ENCODE measurements at regions of chr6 and their contacts with region 1.

Region 1: DNA sequence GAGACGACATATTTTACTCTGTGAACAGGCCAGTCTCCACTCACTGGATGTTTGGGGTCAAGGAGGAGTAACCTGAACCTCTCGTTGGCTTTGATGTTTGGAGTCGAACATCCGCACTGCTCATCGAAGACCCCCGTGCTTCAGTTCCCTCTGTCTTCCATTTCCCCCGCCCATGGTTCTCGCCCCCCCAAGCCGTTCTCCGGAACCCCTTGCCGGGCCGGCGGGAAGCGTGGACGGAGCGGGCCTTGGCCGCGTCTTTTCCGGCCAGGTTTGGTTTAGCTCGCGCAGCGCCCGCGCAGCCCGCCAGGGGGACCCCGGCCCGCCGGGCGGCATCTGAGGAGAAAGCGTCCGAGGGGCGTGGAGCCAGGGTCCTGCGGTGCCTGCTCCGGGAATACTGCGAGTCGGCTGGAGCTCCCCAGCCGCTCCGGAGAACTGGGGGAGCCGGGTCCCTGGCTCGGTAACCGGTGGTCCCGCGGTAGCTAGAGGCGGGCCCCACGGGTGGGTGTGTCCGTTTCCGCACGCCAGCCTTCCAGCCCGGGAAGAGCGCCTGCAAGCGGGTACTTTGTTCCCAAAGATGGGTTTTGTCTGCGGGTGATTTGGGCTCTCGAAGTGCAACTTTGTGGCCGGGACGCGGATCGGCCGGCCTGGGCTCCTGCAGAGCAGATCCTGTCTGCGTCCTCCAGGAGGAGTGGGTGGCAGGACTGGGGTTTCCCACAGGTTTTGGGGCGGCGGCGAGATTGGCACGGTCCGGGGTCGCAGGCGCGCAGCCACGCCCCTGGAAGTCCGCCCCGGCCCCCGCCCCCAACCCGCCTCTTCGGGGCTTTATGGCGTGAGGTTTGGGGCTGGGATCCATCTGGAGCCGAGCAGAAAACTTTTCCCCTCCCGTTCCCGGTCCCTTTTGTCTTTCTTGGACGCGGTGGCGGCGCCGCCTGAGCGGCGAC is at the start of gene TMEM200A:
- DNase-seq: peak; percentile 88
- total RNA-seq, gene TMEM200A: 10.3 to 24.0 TPM

Region 2: DNA sequence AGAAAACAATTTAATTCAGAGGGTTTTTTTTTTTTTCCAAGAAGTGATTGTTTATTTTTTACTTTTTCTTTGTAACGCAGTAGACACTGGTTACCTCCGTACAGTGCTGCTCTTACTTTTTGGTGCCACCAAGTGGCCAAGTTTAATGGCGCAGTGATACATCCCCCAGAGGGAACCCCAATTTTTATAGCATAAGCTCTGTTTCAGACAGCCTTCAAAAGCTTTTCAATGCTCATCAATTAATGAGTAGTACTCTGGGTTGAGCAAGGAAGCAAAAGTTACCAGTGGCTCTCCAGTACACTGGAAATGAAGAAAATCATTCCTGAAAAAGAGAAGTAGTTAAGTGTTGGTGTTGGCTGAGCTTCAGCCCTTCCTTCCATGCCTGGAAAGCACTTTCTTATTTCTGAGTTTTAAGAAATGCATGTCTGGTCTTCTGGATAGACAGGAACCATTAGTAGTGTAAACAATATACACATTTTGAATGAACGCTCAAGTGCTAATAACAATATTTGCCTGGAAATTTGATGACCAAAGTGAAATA is 332.6 kb after region 1 on chr6:
- intact Hi-C with region 1: loop called in 1 of 2 experiments (anchors 5 kb)
- DNase-seq: no peak